ENCODE measurements at regions of chr9 and their contacts with region 1.

Region 1: GRCh38 chr9:99819856-99820684 is 1.6 kb upstream of the NR4A3 start:
- DNase-seq: peak; percentile 91
- H3K4me3 ChIP-seq: peak overlapping the region; percentile 87 to 92 (median 92)
- H3K27ac ChIP-seq: peak overlapping the region; percentile 83
- H3K4me1 ChIP-seq: peaks cover 37% of the 10 kb centered on the region
- H3K27me3 ChIP-seq: peaks cover 12% of the 10 kb centered on the region
- CTCF ChIP-seq: peak in 1 of 2 donors; percentile 12

Region 2: DNA sequence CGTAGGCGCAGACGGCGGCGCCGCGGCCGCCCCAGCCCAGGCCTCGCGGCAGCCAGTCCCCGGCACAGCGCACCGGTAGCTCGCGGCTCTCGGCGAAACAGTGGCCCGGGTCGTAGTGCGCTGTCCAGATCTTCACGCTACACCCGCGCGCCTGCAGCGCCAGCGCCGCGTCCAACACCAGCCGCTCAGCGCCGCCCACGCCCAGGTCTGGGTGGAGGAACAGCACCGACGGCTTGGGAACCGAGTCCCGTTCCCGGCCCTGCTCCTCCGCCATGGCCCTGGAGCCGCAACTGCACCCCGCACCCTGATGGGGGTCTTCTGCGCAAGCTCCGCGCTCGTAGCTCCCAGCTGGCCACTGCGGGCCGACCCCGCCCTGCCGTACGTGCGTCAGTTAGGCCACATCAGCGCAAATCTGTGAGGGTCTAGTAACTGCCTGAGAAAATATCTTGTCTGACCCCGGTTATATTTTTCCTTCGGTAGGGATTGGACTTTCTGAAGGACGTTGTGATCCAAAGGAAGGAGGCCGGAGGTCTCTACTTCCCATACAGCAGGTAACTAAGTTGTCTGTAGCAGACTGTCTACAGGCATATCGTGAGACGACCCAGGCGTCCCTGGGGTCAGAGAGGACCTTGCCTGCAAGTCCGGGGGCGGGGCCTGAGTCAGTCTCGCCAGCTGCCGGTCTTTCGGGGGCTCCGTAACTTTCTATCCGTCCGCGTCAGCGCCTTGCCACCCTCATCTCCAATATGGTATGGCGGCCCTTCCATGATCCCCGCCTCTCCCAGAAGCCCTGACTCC is 598.3 kb before region 1 on chr9 and contains the starts of genes ALG2 and SEC61B:
- CTCF ChIA-PET with region 1: no interaction called
- dilution Hi-C with region 1: no loop called
- in situ Hi-C with region 1: no loop called
- intact Hi-C with region 1: loop called (anchors 2 kb)
- DNase-seq: peak; percentile 91
- H3K4me3 ChIP-seq: peak within 1 kb of the TSS; percentile 88 to 98 (median 98)
- H3K27ac ChIP-seq: peak within 1 kb of the TSS; percentile 94
- H3K4me1 ChIP-seq: peaks cover 16% of the 10 kb centered on the region
- H3K27me3 ChIP-seq: no peaks in the 10 kb centered on the region
- CTCF ChIP-seq: no peak
- total RNA-seq, gene ALG2: 42.1 to 56.5 TPM
- total RNA-seq, gene SEC61B: 62.0 to 164 TPM

Region 3: DNA sequence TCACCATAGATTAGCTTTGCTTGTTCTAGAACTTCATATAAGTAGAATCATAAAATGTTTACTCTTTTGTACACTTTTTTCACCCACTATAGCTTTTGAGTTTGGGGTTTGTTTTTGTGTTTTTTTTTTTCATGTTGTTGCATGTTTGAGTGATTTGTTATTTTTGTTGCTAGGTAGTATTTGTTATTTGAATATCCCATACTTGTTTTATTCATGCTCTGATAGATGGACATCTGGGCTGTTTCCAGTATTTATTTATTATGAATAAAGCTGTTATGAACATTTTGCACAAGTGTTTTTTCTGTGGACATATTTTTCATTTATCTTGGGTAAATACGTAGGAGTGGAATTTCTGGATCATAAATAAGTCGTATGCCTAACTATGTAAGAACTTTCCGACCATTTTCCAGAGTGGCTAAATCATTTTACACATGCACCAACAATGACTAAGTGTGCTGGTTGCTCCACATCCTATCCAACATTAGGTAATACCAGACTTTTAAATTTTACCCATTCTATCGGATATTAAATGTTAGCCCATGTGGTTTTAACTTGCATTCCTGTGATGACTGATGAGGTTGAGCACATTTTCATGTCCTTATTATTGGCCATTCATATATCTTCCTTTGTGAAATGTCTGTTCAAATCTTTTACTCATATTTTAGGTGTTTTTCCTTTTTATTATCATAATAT is 67.5 kb before region 1 on chr9:
- CTCF ChIA-PET with region 1: no interaction called
- dilution Hi-C with region 1: no loop called
- in situ Hi-C with region 1: no loop called
- intact Hi-C with region 1: loop called (anchors 1 kb)
- DNase-seq: peak; percentile 89
- H3K4me3 ChIP-seq: peak overlapping the region in 1 of 3 experiments; percentile 28
- H3K27ac ChIP-seq: peak overlapping the region; percentile 95
- H3K4me1 ChIP-seq: peaks cover 14% of the 10 kb centered on the region
- H3K27me3 ChIP-seq: no peaks in the 10 kb centered on the region
- CTCF ChIP-seq: no peak

Region 4: GRCh38 chr9:99966720-99967119 is 146.7 kb after region 1 on chr9:
- CTCF ChIA-PET with region 1: no interaction called
- dilution Hi-C with region 1: no loop called
- in situ Hi-C with region 1: no loop called
- intact Hi-C with region 1: loop called (anchors 5 kb)
- DNase-seq: peak; percentile 80
- H3K4me3 ChIP-seq: no peak overlapping the region
- H3K27ac ChIP-seq: no peak overlapping the region
- H3K4me1 ChIP-seq: peaks cover 11% of the 10 kb centered on the region
- H3K27me3 ChIP-seq: no peaks in the 10 kb centered on the region
- CTCF ChIP-seq: no peak

Region 5: DNA sequence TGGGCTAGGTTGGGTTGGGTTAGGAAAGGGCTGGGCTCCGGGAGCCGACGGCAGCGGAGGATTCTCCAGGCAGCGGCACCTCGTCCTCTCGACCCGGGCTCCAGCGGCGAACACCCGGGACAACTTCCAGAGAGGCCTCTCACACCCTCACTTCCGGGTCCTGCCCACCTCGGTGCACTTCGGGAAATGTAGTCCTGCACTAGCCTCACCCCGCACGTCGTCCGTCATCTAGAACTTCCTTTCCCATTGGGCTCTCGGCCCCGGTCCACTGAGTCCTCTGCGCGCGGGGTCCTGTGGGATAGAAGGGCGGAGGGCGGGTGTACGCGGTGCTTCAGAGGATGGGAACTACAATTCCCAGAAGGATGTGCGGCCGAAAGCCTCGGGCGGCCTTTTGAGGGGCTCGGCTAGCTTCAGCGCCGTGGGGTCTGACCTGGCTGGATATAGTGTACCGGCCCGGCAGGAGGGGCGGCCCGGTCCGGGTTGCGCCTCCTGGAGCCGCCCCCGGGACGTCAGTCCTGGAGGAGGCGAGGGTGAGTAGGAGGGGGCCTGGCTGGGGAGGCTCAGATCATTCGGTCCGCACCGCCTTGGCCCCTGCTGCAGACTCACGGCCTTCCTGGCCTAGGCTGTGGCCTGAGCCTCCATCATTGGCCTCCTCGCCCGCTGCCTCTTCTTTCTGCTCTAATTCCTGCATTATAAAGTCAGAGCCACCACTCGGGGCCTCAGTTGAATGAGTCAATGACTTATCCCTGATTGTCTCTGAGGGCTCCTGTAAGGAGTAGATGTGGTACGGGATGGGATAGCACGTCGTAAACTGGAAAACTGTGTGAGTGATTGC is 279.0 kb after region 1 on chr9 and contains the starts of genes ERP44 and INVS:
- CTCF ChIA-PET with region 1: no interaction called
- dilution Hi-C with region 1: no loop called
- in situ Hi-C with region 1: no loop called
- intact Hi-C with region 1: loop called (anchors 2 kb)
- DNase-seq: peak; percentile 99
- H3K4me3 ChIP-seq: peak within 1 kb of the TSS; percentile 77 to 95 (median 86)
- H3K27ac ChIP-seq: peak within 1 kb of the TSS; percentile 68
- H3K4me1 ChIP-seq: peaks cover 8% of the 10 kb centered on the region
- H3K27me3 ChIP-seq: no peaks in the 10 kb centered on the region
- CTCF ChIP-seq: no peak
- total RNA-seq, gene ERP44: 11.0 to 16.9 TPM
- total RNA-seq, gene INVS: 21.0 to 22.8 TPM

Region 6: GRCh38 chr9:100426530-100427428 is 606.7 kb after region 1 on chr9 and contains the start of gene MSANTD3:
- CTCF ChIA-PET with region 1: no interaction called
- dilution Hi-C with region 1: no loop called
- in situ Hi-C with region 1: no loop called
- intact Hi-C with region 1: loop called (anchors 10 kb)
- DNase-seq: peak; percentile 76
- H3K4me3 ChIP-seq: peak within 1 kb of the TSS; percentile 63 to 74 (median 69)
- H3K27ac ChIP-seq: peak within 1 kb of the TSS; percentile 95
- H3K4me1 ChIP-seq: peaks cover 37% of the 10 kb centered on the region
- H3K27me3 ChIP-seq: no peaks in the 10 kb centered on the region
- CTCF ChIP-seq: no peak
- total RNA-seq, gene MSANTD3: 44.3 to 74.0 TPM

Measured in mammary epithelial cell (primary cell).